Activated T-helper 1 cell treated with anti-CD3 and anti-CD28 coated beads, Interleukin-12 subunit alpha, Interleukin-12 subunit beta, Interleukin-2, Interleukin-4 antibody, amounts not matched to agents 30 ng/mL and 10 ng/mL and 1 ng/mL, durations not matched to agents 14 hours and 24 hours and 36 hours (primary cell): ENCODE measurements at regions of chr22 and their contacts with region 1.

Region 1: GRCh38 chr22:36873680-36874537 is 13.1 kb downstream of the NCF4 start:
- DNase-seq: peak; percentile 52
- H3K4me3 Mint-ChIP-seq: peak overlapping the region; percentile 30
- H3K27ac Mint-ChIP-seq: peak overlapping the region; percentile 86
- H3K4me1 Mint-ChIP-seq: peaks cover 28% of the 10 kb centered on the region
- H3K27me3 Mint-ChIP-seq: no peaks in the 10 kb centered on the region

Region 2: DNA sequence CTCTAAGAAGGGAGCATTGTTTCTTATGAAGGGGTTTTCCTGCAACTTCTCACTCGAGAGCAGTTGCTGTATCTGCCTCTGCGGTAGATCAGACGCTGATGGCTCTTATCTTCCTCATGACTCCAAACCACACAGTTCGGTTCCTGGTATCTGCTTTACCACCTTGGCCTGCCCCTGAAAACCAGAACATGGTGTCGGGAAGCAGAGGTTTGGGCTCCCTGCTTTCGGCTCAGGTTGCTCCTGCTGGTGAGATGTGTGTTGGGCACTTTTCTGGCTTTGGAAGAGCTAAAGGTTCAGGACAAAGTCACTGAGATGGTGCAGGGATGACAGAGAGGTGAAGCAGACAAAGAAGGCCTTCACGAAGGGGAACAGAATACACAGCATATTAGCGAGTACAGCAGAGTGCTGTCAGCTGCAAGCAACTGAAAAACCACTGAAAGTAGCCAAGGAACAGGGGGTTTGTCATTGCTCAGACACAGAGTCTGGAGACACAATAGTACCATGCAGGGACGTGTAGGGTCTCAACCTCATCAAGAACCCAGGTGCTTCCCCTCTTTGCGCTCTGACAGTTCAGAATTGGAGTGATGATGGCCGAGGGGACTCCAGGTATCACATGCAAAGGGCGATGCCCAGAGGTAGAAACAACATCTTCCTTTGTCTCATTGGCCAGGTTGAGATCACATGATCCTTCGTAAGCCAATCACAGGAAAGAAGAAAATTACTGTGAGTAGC is 27.7 kb after region 1 on chr22:
- intact Hi-C with region 1: loop called (anchors 1 kb)
- DNase-seq: peak; percentile 49
- H3K4me3 Mint-ChIP-seq: peak overlapping the region; percentile 43
- H3K27ac Mint-ChIP-seq: peak overlapping the region; percentile 85
- H3K4me1 Mint-ChIP-seq: peaks cover 46% of the 10 kb centered on the region
- H3K27me3 Mint-ChIP-seq: peaks cover 13% of the 10 kb centered on the region